Activated B cell treated with CpG ODN at 0.5 μM for 24 hours (primary cell): ENCODE measurements at regions of chr3 and their contacts with region 1.

Region 1: GRCh38 chr3:88003115-88003755 is 55.6 kb downstream of the CGGBP1 start:
- DNase-seq: no peak
- ATAC-seq: no peak
- H3K4me3 Mint-ChIP-seq: no peak overlapping the region
- H3K27ac Mint-ChIP-seq: no peak overlapping the region
- H3K4me1 Mint-ChIP-seq: peaks cover 10% of the 10 kb centered on the region
- H3K27me3 Mint-ChIP-seq: no peaks in the 10 kb centered on the region
- CTCF ChIP-seq: peak; percentile 62

Region 2: DNA sequence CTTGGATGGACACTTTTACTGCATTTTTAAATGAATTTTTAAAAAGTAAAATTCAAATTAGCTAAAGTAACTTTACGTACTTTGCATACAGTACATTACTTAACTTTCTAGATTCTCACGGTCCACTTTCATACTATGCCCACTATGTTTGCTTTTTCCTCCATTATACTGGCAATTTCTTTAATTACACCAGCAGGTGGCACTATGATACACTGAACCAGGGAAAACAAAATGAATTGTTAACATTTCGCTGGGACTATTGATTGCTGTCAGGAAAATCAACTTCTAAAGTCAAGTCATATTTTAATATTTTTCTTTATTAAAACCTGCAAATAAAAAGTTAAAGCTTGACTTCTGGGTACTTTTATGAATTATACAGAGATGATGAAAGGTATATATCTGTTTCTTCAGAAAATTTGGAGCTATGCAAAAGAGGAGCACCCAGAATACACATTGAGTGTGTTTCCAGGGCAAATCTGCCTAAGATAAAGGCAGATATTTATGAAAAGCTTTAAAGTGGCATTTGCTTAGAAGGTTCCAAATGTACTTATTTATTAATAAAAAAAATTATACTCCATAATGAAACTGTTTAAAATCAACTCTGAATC is 705.0 kb before region 1 on chr3:
- CTCF ChIA-PET with region 1: interaction called, 10 read pairs
- POLR2A ChIA-PET with region 1: no interaction called
- intact Hi-C with region 1: loop called (anchors 1 kb)
- DNase-seq: no peak
- ATAC-seq: peak; percentile 50
- H3K4me3 Mint-ChIP-seq: no peak overlapping the region
- H3K27ac Mint-ChIP-seq: no peak overlapping the region
- H3K4me1 Mint-ChIP-seq: no peaks in the 10 kb centered on the region
- H3K27me3 Mint-ChIP-seq: no peaks in the 10 kb centered on the region
- CTCF ChIP-seq: no peak

Region 3: DNA sequence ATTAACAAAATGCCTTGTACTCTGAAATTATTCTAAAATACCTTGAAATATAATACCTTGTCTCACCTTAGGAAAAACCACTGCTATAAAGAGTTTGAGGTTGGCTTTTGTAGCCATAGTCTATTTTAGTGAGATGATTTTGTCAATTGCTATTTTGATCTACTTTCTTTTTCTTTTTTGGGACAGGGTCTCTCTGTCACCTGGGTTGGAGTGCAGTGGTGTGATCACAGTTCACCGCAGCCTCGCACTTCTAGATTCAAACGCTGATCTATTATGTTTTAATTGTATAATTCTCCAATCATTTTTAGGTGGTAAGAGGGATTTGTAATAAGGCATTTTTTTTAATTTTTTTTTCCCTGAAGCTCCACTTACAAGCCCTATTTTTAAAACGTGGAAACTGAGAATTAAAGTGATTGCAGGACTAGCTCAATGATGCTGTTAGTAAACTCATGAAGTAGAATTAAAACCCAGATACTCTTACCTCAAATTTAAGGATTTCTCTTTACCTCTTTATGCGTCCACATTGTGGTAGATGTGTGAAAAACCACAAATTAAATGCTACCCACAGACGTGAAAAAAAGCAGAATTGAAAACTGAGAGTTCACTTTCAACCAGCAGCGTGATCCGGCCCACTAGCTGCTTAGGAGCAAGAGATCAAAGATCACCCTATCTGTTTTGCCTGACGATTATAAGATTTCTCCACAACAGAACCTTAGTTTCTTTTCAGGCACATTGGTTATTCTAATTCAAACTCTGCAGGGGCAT is 328.7 kb before region 1 on chr3:
- CTCF ChIA-PET with region 1: no interaction called
- POLR2A ChIA-PET with region 1: no interaction called
- intact Hi-C with region 1: loop called (anchors 5 kb)
- DNase-seq: no peak
- ATAC-seq: peak; percentile 70
- H3K4me3 Mint-ChIP-seq: no peak overlapping the region
- H3K27ac Mint-ChIP-seq: no peak overlapping the region
- H3K4me1 Mint-ChIP-seq: peaks cover 8% of the 10 kb centered on the region
- H3K27me3 Mint-ChIP-seq: peaks cover 25% of the 10 kb centered on the region
- CTCF ChIP-seq: no peak

Region 4: DNA sequence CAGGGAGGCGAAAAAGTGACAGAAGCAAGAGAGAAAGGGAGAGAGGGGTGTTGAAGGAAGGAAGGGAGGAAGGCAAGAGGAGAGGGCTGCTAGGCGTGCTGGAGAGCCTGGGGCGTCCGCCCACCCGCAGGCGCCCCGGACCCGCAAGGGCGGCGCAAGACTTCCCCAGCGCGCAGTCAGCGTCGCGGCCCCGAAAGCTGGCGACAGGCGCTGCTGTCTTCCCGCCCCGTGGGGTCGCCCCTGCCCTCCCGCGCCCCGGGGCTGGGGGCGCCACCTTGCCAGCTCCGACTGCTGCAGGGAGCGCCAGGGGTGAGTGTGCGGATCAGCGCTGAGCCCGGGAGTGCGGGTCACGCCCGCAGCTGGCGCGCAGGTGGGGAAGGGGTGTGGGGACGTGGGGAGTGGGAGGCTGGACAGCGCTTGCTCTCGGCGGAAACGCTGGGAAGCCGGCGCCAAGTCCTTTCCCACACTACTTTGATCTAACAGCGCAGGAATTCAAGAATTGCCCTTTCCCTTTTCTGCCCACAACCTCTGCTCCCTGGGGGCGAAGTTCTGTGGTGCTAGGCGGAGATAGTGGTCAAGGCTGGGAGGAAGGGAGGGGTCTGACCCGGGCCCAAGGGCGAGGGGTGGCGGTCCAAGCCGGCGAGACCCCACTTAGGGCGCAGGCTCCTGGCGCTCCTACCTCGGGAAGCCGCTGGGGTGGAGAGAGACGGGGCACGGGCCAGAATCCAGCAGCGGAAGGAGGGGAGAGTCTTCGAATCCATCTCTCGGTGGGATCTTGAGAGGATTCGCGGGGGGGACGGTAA is 210.5 kb before region 1 on chr3:
- CTCF ChIA-PET with region 1: no interaction called
- POLR2A ChIA-PET with region 1: no interaction called
- intact Hi-C with region 1: loop called (anchors 5 kb)
- DNase-seq: peak; percentile 16
- ATAC-seq: peak; percentile 45
- H3K4me3 Mint-ChIP-seq: peak within 1 kb of the TSS; percentile 82
- H3K27ac Mint-ChIP-seq: no peak within 1 kb of the TSS
- H3K4me1 Mint-ChIP-seq: peaks cover 31% of the 10 kb centered on the region
- H3K27me3 Mint-ChIP-seq: peaks cover 33% of the 10 kb centered on the region
- CTCF ChIP-seq: no peak

Region 5: GRCh38 chr3:88113311-88114162 is 110.3 kb after region 1 on chr3:
- CTCF ChIA-PET with region 1: interaction called, 8 read pairs
- POLR2A ChIA-PET with region 1: no interaction called
- intact Hi-C with region 1: loop called (anchors 1 kb)
- DNase-seq: no peak
- ATAC-seq: peak; percentile 89
- H3K4me3 Mint-ChIP-seq: no peak overlapping the region
- H3K27ac Mint-ChIP-seq: no peak overlapping the region
- H3K4me1 Mint-ChIP-seq: peaks cover 7% of the 10 kb centered on the region
- H3K27me3 Mint-ChIP-seq: no peaks in the 10 kb centered on the region
- CTCF ChIP-seq: no peak

Region 6: GRCh38 chr3:88311826-88312225 is 308.6 kb after region 1 on chr3:
- CTCF ChIA-PET with region 1: no interaction called
- POLR2A ChIA-PET with region 1: no interaction called
- intact Hi-C with region 1: no loop called
- DNase-seq: no peak
- ATAC-seq: no peak
- H3K4me3 Mint-ChIP-seq: no peak overlapping the region
- H3K27ac Mint-ChIP-seq: no peak overlapping the region
- H3K4me1 Mint-ChIP-seq: no peaks in the 10 kb centered on the region
- H3K27me3 Mint-ChIP-seq: peaks cover 1% of the 10 kb centered on the region
- CTCF ChIP-seq: no peak

Region 7: GRCh38 chr3:88408935-88409334 is 405.7 kb after region 1 on chr3:
- CTCF ChIA-PET with region 1: no interaction called
- POLR2A ChIA-PET with region 1: no interaction called
- intact Hi-C with region 1: no loop called
- DNase-seq: no peak
- ATAC-seq: no peak
- H3K4me3 Mint-ChIP-seq: no peak overlapping the region
- H3K27ac Mint-ChIP-seq: no peak overlapping the region
- H3K4me1 Mint-ChIP-seq: peaks cover 12% of the 10 kb centered on the region
- H3K27me3 Mint-ChIP-seq: peaks cover 3% of the 10 kb centered on the region
- CTCF ChIP-seq: no peak